ENCODE measurements at regions of chr11 and their contacts with region 1.

Region 1: DNA sequence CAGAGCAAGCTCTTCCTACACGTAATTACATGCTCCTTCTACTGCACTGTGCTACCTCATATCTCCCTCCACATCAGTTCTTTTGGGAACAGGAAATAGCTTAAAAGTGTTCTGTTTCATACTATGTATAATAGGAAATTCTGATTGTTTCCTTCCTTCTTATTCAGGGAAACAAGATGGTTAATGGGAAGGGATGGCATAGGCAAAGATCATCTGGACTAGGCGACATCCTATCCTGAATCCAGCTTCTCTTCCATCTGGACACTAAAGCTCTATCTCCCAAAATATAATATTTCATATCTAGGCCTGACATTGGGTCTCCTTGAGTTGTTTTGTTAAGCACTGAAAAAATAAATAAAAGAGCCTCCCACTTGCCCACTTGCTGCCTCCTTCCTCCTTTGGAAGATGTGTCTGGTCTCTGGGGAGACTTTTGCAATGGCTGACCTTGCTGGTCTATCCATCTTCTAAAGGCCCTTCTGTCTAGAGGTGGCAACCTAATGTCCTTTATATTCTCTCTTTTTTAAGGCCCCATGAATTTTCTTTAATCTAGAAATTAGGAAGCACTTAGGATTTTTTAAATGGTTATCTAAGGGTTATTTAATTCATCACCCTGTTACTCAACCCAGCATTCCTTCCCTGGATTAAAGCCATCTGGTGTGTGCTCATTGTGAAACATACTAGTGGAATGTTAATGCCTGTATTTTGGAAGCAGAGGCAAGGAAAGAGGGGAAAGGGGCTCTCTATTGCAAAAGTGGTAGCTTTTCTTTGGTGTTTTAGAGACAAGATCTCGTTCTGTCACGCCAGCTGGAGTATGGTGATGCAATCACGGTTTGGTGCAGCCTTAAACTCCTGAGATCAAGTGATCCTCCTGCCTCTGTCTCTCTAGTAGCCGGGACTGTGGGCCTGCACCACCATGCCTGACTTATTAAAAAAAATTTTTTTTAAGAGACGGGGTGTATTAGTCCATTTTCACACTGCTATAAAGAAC is 20.6 kb downstream of the CLMP start:
- DNase-seq: peak; percentile 96
- H3K4me3 ChIP-seq: no peak overlapping the region
- H3K27ac ChIP-seq: peak overlapping the region; percentile 98
- H3K27me3 ChIP-seq: no peaks in the 10 kb centered on the region
- CTCF ChIP-seq: no peak

Region 2: DNA sequence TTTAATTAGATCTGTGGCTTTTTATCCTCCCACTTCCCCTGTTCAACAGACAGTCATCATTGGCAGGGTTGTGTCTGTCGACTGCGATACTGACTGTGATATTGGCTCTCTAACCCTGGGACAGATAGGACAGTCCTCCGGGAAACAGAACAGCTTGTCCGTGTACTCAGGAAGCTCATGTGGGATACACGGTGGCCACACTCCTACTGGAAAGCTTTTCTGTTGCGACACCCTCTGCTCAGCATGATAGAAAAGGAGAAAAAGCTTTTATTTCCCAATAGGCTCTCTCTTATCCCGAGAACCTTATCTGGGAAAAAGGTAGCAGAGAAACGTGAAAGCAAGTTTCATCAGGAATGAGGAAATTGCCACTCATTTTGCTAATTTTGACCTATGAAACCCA is 52.1 kb before region 1 on chr11:
- CTCF ChIA-PET with region 1: no interaction called
- POLR2A ChIA-PET with region 1: no interaction called
- DNase-seq: no peak
- H3K4me3 ChIP-seq: no peak overlapping the region
- H3K27ac ChIP-seq: peak overlapping the region; percentile 75
- H3K27me3 ChIP-seq: no peaks in the 10 kb centered on the region
- CTCF ChIP-seq: no peak

Region 3: DNA sequence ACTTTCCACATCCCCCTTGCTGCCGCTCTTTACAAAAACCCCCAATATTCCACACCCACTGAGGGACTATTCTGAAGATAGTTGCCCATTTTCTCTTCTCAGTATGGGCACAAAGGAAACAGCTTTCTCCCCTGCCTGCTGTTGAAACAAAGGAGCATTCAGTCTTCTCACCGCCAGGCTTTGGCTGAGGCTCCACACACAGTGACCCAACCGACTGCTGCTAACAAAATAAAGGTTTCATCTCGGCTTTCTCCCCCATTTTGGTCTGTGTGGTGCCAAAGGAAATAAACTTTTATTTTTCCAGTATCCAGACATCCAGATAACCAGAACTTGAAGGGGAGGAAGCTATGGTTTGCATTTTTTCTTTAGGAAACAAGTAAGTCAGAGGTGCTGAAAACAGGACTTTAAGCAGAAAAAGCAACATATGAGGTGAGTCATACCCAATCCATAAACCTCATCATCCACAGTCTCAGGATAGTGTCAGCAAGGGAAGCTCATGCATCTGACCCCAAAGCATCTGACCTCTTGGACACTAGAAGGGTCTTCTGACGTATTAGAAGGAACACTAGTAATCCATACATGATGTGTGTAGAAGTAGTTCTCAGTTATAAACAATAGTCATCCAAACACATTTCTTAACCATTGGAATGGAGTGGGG is 14.1 kb after region 1 on chr11:
- CTCF ChIA-PET with region 1: interaction called, 4 read pairs
- POLR2A ChIA-PET with region 1: interaction called, 28 read pairs
- DNase-seq: peak; percentile 91
- H3K4me3 ChIP-seq: peak overlapping the region; percentile 50
- H3K27ac ChIP-seq: peak overlapping the region; percentile 96
- H3K27me3 ChIP-seq: no peaks in the 10 kb centered on the region
- CTCF ChIP-seq: peak; percentile 27; the same call in 1 of the 2 replicates